Common myeloid progenitor, CD34-positive (primary cell): ENCODE measurements at regions of chr15 and their contacts with region 1.

Region 1: GRCh38 chr15:78276064-78276943 is 11.9 kb downstream of the DNAJA4 start:
- DNase-seq: no peak
- H3K4me3 ChIP-seq: no peak overlapping the region
- H3K27ac ChIP-seq: peak overlapping the region in 1 of 2 experiments; percentile 19
- H3K4me1 ChIP-seq: peaks cover 0 to 10% (median 0%) of the 10 kb centered on the region in 4 experiments
- H3K27me3 ChIP-seq: no peaks in the 10 kb centered on the region

Region 2: DNA sequence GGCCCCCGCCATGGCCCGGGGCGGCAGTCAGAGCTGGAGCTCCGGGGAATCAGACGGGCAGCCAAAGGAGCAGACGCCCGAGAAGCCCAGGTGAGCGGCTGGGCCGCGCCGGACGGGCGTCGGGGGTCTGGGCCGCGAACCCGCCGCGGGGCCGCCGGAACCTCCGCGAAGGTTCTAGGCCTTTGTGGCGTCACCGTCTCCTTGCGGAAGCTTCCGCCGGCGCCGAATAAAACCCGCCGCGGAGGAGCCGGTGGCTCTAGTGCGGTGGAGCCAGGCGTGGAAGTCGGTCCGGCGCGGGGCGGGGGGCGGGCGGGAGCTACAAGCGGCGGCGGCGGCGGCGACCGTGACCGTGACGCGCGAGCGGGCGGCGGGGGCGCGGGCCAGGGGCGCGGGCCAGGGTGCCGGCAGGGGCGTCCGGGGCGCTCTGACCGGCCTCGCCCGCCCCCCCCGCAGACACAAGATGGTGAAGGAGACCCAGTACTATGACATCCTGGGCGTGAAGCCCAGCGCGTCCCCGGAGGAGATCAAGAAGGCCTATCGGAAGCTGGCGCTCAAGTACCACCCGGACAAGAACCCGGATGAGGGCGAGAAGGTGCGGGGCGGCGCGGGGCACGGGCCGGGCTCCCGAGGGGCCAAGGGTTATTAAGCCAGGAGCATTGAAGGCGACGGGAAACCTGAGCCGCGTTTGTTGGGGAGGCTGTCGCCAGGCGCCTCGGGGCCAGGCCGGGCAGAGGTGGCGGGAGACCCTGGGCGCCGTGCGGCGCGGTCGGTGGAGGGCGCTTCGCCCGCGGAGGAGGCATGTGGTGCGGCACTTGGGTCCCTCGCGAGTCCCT is 11.8 kb before region 1 on chr15 and contains the start of gene DNAJA4:
- CTCF ChIA-PET with region 1: interaction called, 14 read pairs
- POLR2A ChIA-PET with region 1: interaction called, 3 read pairs
- DNase-seq: peak; percentile 73 to 83 (median 78)
- H3K4me3 ChIP-seq: peak within 1 kb of the TSS; percentile 37 to 81 (median 66)
- H3K27ac ChIP-seq: no peak within 1 kb of the TSS
- H3K4me1 ChIP-seq: peaks cover 0 to 13% (median 8%) of the 10 kb centered on the region in 4 experiments
- H3K27me3 ChIP-seq: peaks cover 0 to 5% (median 0%) of the 10 kb centered on the region in 5 experiments

Region 3: DNA sequence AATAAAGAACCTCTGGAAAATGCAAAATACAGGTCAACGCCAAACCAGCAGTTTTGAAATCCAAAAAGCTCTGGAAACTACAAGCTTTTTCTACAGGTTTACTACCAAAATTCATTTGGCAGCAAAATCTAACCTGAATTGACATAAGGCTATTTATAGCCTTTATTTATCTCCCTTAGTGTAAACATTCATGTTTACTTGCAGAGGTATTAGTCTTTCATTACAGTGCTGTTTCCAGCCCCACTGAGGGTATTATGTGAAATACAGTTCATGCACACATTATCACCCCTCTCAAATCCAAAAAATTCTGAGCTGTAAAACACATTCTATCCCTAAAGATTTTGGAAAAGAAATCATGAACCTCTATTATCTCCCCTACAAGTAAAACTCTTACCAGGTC is 15.9 kb after region 1 on chr15:
- CTCF ChIA-PET with region 1: interaction called, 12 read pairs
- POLR2A ChIA-PET with region 1: no interaction called
- DNase-seq: no peak
- H3K4me3 ChIP-seq: no peak overlapping the region
- H3K27ac ChIP-seq: no peak overlapping the region
- H3K4me1 ChIP-seq: no peaks in the 10 kb centered on the region
- H3K27me3 ChIP-seq: no peaks in the 10 kb centered on the region